ENCODE measurements at regions of chr11 and their contacts with region 1.

Region 1: GRCh38 chr11:112219476-112220232 is 6.6 kb upstream of the PTS start:
- DNase-seq: no peak
- ATAC-seq: peak; percentile 100
- H3K4me3 Mint-ChIP-seq: no peak overlapping the region
- H3K27ac Mint-ChIP-seq: no peak overlapping the region
- H3K4me1 Mint-ChIP-seq: peaks cover 2% of the 10 kb centered on the region
- H3K27me3 Mint-ChIP-seq: no peaks in the 10 kb centered on the region
- CTCF ChIP-seq: peak; percentile 58

Region 2: GRCh38 chr11:112453601-112454577 is 234.2 kb after region 1 on chr11:
- CTCF ChIA-PET with region 1: interaction called, 6 read pairs
- POLR2A ChIA-PET with region 1: no interaction called
- intact Hi-C with region 1: loop called (anchors 1 kb)
- DNase-seq: no peak
- ATAC-seq: no peak
- H3K4me3 Mint-ChIP-seq: no peak overlapping the region
- H3K27ac Mint-ChIP-seq: no peak overlapping the region
- H3K4me1 Mint-ChIP-seq: no peaks in the 10 kb centered on the region
- H3K27me3 Mint-ChIP-seq: no peaks in the 10 kb centered on the region
- CTCF ChIP-seq: no peak

Region 3: DNA sequence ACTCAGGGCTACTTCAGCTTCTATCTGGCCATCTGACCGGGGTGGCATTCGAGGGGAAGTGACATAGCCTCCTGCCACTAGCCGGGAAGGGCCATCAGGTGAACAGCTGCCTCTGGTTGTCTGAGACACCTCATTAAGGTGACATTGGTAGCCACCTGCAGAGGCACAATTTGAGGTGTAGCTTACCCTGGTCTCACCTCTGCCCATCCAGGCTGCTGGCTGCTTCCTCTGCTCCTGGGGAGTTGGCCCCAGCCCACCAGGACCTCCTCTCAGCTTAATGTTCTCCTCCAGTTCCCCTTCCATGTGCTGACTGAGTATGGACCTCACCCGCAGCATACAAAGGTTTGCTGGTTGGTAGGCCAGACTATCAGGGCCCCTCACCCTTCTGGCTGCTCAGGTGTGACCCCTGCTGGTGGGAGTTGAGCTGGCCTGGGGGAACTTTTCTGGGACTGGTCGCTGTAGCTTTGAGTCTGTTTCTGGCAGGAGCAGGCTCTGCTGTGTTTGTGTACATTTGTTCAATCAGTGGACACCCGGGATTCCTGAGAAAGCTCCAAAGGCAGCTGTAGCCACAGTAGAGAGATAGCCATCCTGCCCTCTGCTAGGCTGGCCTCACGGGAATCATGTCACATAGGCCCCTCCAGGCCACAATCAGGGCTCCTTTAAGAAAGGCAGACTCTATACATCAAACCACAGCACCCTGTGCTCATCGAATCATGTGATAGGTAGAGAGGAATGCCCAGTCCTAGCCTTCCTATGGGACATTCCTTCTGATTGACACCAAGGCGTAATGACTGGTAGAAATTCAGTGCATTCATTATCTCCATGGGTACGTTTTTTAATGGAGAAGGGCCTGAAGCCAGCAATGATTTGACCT is 336.1 kb after region 1 on chr11:
- CTCF ChIA-PET with region 1: interaction called, 9 read pairs
- POLR2A ChIA-PET with region 1: no interaction called
- intact Hi-C with region 1: loop called (anchors 1 kb)
- DNase-seq: peak; percentile 21
- ATAC-seq: peak; percentile 37
- H3K4me3 Mint-ChIP-seq: no peak overlapping the region
- H3K27ac Mint-ChIP-seq: no peak overlapping the region
- H3K4me1 Mint-ChIP-seq: no peaks in the 10 kb centered on the region
- H3K27me3 Mint-ChIP-seq: peaks cover 9% of the 10 kb centered on the region
- CTCF ChIP-seq: no peak

Region 4: GRCh38 chr11:112588252-112588694 is 368.6 kb after region 1 on chr11:
- CTCF ChIA-PET with region 1: interaction called, 3 read pairs
- POLR2A ChIA-PET with region 1: no interaction called
- intact Hi-C with region 1: loop called (anchors 10 kb)
- DNase-seq: no peak
- ATAC-seq: no peak
- H3K4me3 Mint-ChIP-seq: no peak overlapping the region
- H3K27ac Mint-ChIP-seq: no peak overlapping the region
- H3K4me1 Mint-ChIP-seq: no peaks in the 10 kb centered on the region
- H3K27me3 Mint-ChIP-seq: peaks cover 2% of the 10 kb centered on the region
- CTCF ChIP-seq: peak; percentile 35

Region 5: DNA sequence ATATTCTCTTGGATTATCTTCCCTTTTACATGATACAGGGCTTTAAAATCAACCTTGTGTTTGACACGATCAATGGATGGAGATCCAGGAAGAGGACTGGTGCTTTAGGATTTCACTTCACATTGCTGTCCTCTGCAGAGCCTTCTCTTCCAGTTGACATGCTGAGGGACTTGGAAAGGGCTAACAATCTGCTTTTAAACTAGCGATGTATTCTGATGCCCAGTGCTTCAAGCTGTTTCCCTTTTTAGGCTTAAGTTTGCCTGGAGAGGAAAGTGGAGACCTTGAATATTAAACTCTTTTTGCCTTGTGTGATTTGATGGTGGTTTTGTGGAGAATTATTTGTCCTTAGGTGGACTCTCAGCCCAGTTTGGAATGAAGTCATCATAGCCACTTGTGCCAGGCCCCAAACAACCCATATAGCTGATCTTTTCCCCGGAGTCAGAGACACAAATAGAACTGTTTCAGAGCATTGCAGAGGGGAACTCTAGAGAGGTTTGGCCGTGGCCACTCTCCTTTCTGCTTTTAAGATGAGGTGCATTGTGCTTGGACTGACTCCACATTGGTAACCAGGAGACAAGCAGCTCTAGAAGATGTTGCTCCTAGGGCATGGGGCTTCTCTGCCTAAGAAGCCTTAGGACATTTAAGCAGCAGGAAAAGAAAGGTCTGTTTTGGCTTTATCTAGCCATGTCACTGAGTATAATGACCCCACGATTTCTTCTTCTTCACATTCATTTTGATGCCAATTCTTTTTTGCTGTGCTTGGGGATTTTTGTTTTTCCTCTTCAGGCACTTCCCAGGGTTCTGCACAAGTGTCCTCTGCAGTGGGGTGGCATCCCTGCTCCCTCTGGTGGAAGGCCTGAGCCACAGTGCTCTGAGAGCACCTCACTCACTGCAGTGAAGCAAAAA is 894.4 kb after region 1 on chr11:
- CTCF ChIA-PET with region 1: no interaction called
- POLR2A ChIA-PET with region 1: no interaction called
- intact Hi-C with region 1: loop called (anchors 10 kb)
- DNase-seq: no peak
- ATAC-seq: no peak
- H3K4me3 Mint-ChIP-seq: no peak overlapping the region
- H3K27ac Mint-ChIP-seq: no peak overlapping the region
- H3K4me1 Mint-ChIP-seq: no peaks in the 10 kb centered on the region
- H3K27me3 Mint-ChIP-seq: no peaks in the 10 kb centered on the region
- CTCF ChIP-seq: no peak

Region 6: DNA sequence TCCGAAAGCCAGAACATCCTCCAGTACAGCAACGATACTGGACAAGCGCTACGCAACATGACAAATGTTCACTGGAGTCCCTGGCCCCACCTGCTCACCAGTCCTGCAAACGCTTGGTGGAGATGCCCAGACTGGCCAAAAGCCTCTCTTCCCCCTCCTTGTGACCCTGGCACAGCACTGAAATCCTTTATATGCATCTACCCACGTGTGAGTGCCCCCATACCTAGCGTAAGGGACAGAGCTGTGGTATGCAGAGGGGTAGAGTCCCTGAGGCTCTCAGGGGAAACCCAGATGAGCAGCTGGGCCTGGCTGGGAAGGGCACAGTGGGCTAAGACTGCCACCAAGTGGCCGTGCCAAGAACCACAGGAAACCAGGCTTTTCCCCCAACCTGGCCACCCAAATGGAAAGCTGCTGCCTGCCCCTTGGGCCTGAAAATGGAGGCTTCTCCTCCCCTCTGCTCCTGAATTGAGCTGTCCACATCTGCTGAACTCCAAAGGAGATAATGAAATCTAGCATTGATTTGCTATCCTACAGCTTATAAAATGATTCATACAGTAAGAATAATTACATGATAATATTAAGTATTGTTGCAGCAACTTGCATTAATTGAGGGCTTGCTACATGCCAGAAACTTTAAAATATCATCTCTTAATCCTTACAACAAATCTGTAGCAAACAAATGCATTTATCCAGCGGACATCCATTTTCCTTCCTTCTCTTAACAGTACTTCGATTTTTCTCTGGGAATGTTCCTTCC is 1070.0 kb after region 1 on chr11:
- CTCF ChIA-PET with region 1: interaction called, 10 read pairs
- POLR2A ChIA-PET with region 1: no interaction called
- intact Hi-C with region 1: loop called (anchors 1 kb)
- DNase-seq: peak; percentile 66
- ATAC-seq: peak; percentile 100
- H3K4me3 Mint-ChIP-seq: no peak overlapping the region
- H3K27ac Mint-ChIP-seq: no peak overlapping the region
- H3K4me1 Mint-ChIP-seq: peaks cover 2% of the 10 kb centered on the region
- H3K27me3 Mint-ChIP-seq: peaks cover 4% of the 10 kb centered on the region
- CTCF ChIP-seq: peak; percentile 83

Region 7: DNA sequence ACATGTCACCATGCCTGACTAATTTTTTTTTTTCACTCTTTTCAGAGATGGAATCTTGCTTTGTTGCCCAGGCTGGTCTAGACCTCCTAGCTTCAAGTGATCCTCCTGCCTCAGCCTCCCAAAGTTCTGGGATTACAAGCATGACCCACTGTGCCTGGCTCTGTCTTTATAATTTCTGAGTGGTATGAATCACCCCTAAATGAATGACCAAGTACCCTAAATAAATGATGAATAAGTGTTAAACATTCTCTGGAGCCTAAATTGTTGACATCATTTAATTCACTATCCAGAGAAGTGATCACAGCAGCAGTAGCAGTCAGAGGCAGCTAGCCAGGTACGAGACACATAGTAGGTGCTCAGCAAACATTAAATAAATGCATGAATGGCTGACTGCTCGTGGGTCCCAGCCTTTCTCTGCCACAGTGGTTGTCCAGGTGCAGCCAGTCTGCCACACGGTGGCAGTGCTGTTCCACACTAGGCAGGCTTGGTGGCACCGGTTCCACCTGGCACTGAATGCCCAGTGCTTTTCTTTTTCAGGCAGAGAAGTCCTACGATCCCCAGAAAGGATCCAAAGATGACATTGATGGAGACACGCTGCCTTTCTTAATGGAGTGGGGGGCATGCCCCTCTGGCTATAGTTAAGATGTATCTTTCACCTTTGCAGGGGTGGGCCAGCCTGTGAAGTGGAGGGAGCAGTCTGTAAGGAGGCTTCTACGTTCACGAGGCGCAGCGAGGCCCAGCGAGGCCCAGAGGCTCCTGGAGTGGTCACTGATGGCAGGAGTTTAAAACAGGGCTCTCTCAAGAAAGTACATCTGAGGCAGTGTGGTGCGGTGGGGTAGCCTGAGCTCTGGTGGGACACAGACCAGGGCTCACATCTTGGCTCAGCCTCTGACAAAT is 1086.0 kb after region 1 on chr11:
- CTCF ChIA-PET with region 1: no interaction called
- POLR2A ChIA-PET with region 1: no interaction called
- intact Hi-C with region 1: loop called (anchors 5 kb)
- DNase-seq: peak; percentile 48
- ATAC-seq: peak; percentile 89
- H3K4me3 Mint-ChIP-seq: no peak overlapping the region
- H3K27ac Mint-ChIP-seq: no peak overlapping the region
- H3K4me1 Mint-ChIP-seq: no peaks in the 10 kb centered on the region
- H3K27me3 Mint-ChIP-seq: peaks cover 5% of the 10 kb centered on the region
- CTCF ChIP-seq: no peak